Heart left ventricle (tissue), 16 donors: ENCODE measurements at regions of chr9 and their contacts with region 1.

Region 1: GRCh38 chr9:17660158-17660557 is 81.3 kb downstream of the SH3GL2 start:
- DNase-seq: no peak
- ATAC-seq: no peak
- H3K4me3 ChIP-seq: no peak overlapping the region
- H3K27ac ChIP-seq: no peak overlapping the region
- H3K4me1 ChIP-seq: no peaks in the 10 kb centered on the region
- H3K27me3 ChIP-seq: no peaks in the 10 kb centered on the region
- CTCF ChIP-seq: no peak
- POLR2A ChIP-seq: no peak

Region 2: GRCh38 chr9:17600962-17601593 is 59.1 kb before region 1 on chr9:
- intact Hi-C with region 1: no loop called
- DNase-seq: no peak
- ATAC-seq: no peak
- H3K4me3 ChIP-seq: no peak overlapping the region
- H3K27ac ChIP-seq: no peak overlapping the region
- H3K4me1 ChIP-seq: peaks cover 0 to 7% (median 0%) of the 10 kb centered on the region in 12 donors
- H3K27me3 ChIP-seq: no peaks in the 10 kb centered on the region
- CTCF ChIP-seq: no peak
- POLR2A ChIP-seq: no peak

Region 3: GRCh38 chr9:17688834-17689233 is 28.7 kb after region 1 on chr9:
- intact Hi-C with region 1: loop called in 1 of 10 experiments (anchors 2 kb)
- DNase-seq: no peak
- ATAC-seq: no peak
- H3K4me3 ChIP-seq: no peak overlapping the region
- H3K27ac ChIP-seq: no peak overlapping the region
- H3K4me1 ChIP-seq: no peaks in the 10 kb centered on the region
- H3K27me3 ChIP-seq: no peaks in the 10 kb centered on the region
- CTCF ChIP-seq: no peak
- POLR2A ChIP-seq: no peak